ENCODE measurements at regions of chr5 and their contacts with region 1.

Region 1: DNA sequence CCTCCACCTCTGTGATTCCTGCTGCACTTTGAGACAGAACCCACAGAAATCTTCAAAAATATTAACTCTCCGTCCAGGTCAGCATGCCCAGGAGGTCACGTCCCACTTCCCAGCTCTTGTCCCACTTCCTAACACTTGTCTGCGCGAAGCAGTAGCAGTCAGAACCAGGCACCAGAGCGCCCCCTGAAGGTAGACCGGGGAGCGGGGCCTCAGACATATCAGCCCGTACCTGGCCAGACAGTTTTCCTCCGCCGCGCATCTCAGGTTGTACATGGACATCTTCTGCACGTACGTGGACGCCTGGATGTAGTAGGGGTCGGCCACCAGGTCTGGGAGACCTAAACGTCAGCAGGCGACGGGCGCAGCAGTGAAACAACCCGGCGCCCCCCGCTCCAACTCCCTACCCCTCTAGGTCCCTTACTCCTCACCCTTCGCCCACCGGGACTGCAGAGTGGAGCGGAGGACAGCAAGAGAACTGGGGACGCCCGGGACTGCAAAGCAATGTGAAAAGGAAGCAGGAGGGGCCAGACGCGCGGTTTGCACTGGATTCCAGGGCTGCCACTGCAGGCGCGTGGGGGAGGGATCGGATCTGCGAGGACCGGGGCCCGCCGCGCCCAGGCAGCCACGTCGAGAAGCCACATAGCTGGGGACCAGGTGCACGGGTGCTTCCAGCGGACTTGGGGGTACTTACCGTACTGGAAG is 1.2 kb downstream of the LOX start:
- DNase-seq: peak; percentile 88
- H3K4me3 ChIP-seq: peak overlapping the region; percentile 51 to 68 (median 67)
- H3K27ac ChIP-seq: peak overlapping the region; percentile 88
- H3K4me1 ChIP-seq: peaks cover 40% of the 10 kb centered on the region
- H3K27me3 ChIP-seq: no peaks in the 10 kb centered on the region
- CTCF ChIP-seq: peak; percentile 85 to 93
- POLR2A ChIP-seq: no peak

Region 2: GRCh38 chr5:120936652-120937051 is 1140.2 kb before region 1 on chr5:
- CTCF ChIA-PET with region 1: no interaction called
- POLR2A ChIA-PET with region 1: no interaction called
- dilution Hi-C with region 1: no loop called
- intact Hi-C with region 1: no loop called
- DNase-seq: no peak
- H3K4me3 ChIP-seq: no peak overlapping the region
- H3K27ac ChIP-seq: no peak overlapping the region
- H3K4me1 ChIP-seq: no peaks in the 10 kb centered on the region
- H3K27me3 ChIP-seq: no peaks in the 10 kb centered on the region
- CTCF ChIP-seq: no peak
- POLR2A ChIP-seq: no peak

Region 3: DNA sequence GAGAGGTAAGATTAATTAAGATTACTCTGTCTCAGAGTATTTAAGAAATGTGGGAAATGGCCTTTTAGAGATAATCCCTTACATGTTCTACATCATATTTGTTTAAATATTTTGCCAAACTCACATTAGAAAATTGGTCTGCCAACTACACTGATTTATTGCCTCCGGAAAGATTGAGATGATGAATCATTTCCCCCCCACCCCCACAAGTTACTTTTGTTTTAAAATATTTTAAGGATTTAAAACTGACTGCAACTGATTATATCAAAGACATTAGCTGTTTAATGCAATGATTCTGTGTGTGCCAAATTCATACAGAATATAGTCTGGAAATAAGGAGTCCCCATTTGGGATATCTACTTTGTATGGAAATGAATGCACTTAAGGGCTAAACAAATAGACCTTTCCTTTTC is 938.3 kb before region 1 on chr5:
- CTCF ChIA-PET with region 1: no interaction called
- POLR2A ChIA-PET with region 1: no interaction called
- dilution Hi-C with region 1: no loop called
- intact Hi-C with region 1: loop called (anchors 5 kb)
- DNase-seq: peak; percentile 83
- H3K4me3 ChIP-seq: no peak overlapping the region
- H3K27ac ChIP-seq: peak overlapping the region; percentile 43
- H3K4me1 ChIP-seq: peaks cover 19% of the 10 kb centered on the region
- H3K27me3 ChIP-seq: no peaks in the 10 kb centered on the region
- CTCF ChIP-seq: no peak
- POLR2A ChIP-seq: no peak

Region 4: GRCh38 chr5:121968910-121969607 is 107.8 kb before region 1 on chr5:
- CTCF ChIA-PET with region 1: interaction called, 164 read pairs
- POLR2A ChIA-PET with region 1: interaction called, 16 read pairs
- dilution Hi-C with region 1: no loop called
- intact Hi-C with region 1: loop called (anchors 1 kb)
- DNase-seq: peak; percentile 97
- H3K4me3 ChIP-seq: peak overlapping the region in 1 of 3 experiments; percentile 59
- H3K27ac ChIP-seq: peak overlapping the region; percentile 96
- H3K4me1 ChIP-seq: peaks cover 32% of the 10 kb centered on the region
- H3K27me3 ChIP-seq: no peaks in the 10 kb centered on the region
- CTCF ChIP-seq: no peak
- POLR2A ChIP-seq: peak; percentile 55

Region 5: DNA sequence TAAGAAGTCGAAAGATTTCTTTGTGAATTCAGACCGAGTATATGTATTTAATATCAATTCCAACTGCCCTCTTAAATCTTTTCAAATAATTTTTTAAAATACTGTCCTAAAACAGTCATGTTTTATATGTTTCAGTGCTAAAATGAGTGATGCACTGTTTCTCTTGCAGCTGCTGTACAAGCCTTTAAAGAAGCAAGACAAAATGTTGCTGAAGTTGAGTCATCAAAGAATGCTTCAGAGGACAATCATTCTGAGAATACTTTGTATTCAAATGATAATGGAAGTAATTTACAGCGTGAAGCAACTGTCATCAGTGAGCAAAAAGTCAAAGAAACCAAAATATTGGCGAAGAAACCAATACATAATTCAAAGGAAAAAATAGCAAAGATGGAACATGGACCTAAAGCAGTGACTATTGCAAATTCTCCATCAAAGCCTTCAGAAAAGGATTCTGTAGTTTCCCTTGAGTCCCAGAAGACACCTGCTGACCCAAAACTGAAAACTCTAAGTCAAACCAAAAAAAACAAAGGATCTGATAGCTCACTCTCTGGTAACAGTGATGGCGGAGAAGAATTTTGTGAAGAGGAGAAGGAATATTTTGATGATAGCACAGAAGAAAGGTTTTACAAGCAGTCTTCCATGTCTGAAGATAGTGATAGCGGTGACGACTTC is 56.8 kb before region 1 on chr5:
- CTCF ChIA-PET with region 1: interaction called, 10 read pairs
- POLR2A ChIA-PET with region 1: no interaction called
- dilution Hi-C with region 1: no loop called
- intact Hi-C with region 1: no loop called
- DNase-seq: no peak
- H3K4me3 ChIP-seq: no peak overlapping the region
- H3K27ac ChIP-seq: no peak overlapping the region
- H3K4me1 ChIP-seq: no peaks in the 10 kb centered on the region
- H3K27me3 ChIP-seq: no peaks in the 10 kb centered on the region
- CTCF ChIP-seq: no peak
- POLR2A ChIP-seq: no peak

Region 6: DNA sequence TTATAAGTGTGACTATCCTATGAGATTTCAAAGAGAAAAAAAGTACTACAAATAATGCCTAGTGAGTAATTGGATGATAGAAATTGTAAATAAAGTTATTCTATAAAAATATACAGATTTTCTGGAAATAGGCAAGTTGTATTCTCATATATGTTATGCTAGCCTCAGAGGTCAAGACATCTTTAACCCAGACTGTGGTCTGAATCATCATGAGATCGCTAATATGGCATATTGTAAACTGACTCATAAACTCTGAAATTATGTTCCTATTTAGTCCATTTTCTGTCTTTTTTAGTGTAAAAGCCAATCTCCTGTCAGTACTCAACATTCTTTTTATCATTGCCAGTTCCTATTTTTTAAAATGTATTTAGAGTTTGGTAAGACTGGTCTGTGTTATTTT is 13.0 kb before region 1 on chr5:
- CTCF ChIA-PET with region 1: interaction called, 37 read pairs
- POLR2A ChIA-PET with region 1: no interaction called
- dilution Hi-C with region 1: no loop called
- intact Hi-C with region 1: no loop called
- DNase-seq: peak; percentile 41
- H3K4me3 ChIP-seq: no peak overlapping the region
- H3K27ac ChIP-seq: no peak overlapping the region
- H3K4me1 ChIP-seq: peaks cover 4% of the 10 kb centered on the region
- H3K27me3 ChIP-seq: no peaks in the 10 kb centered on the region
- CTCF ChIP-seq: no peak
- POLR2A ChIP-seq: no peak

Region 7: GRCh38 chr5:122156724-122157325 is 80.0 kb after region 1 on chr5:
- CTCF ChIA-PET with region 1: interaction called, 31 read pairs
- POLR2A ChIA-PET with region 1: no interaction called
- dilution Hi-C with region 1: no loop called
- intact Hi-C with region 1: loop called (anchors 5 kb)
- DNase-seq: peak; percentile 42
- H3K4me3 ChIP-seq: no peak overlapping the region
- H3K27ac ChIP-seq: no peak overlapping the region
- H3K4me1 ChIP-seq: peaks cover 8% of the 10 kb centered on the region
- H3K27me3 ChIP-seq: no peaks in the 10 kb centered on the region
- CTCF ChIP-seq: peak in 1 of 2 donors; percentile 19
- POLR2A ChIP-seq: no peak

Region 8: DNA sequence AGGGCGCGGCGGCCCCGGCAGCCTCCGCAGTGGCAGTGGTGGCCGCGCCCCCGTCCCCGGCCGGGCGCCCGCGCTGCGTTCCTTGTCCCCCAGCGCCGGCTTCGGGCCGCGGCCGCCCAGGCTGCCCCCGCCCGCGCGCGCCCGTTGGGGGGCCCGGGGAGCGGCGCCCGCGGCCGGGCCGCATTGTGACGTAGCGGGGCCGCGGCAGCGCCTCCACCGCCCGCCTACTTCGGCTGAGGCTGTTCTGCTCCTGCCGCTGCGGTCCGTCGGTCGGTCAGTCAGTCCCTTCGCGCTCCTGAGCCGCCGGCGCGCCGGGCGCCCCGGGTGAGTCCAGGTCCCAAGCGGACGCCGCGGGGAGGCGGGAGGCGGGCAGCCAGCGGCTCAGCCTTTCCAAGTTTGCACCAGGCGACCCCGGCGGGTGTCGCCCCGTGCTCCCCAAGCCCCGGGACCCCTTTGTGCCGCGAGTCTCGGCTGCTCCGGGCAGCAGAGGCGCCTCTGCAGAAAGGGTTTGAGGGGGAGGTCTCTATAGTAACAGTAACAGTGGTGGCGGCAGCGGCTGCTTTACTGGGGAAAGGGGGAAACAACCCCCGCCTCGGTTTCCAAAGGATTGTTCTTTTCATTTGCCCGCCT is 235.3 kb after region 1 on chr5 and contains the start of gene SNCAIP:
- CTCF ChIA-PET with region 1: no interaction called
- POLR2A ChIA-PET with region 1: no interaction called
- dilution Hi-C with region 1: no loop called
- intact Hi-C with region 1: loop called (anchors 2 kb)
- DNase-seq: peak; percentile 58
- H3K4me3 ChIP-seq: peak within 1 kb of the TSS; percentile 59 to 89 (median 81)
- H3K27ac ChIP-seq: peak within 1 kb of the TSS; percentile 62
- H3K4me1 ChIP-seq: peaks cover 25% of the 10 kb centered on the region
- H3K27me3 ChIP-seq: no peaks in the 10 kb centered on the region
- CTCF ChIP-seq: no peak
- POLR2A ChIP-seq: no peak
- total RNA-seq, gene SNCAIP: 35.9 and 42.0 TPM in 2 replicates

Measured in endothelial cell of umbilical vein (primary cell).